BJ (cell line): ENCODE measurements at regions of chr22 and their contacts with region 1.

Region 1: DNA sequence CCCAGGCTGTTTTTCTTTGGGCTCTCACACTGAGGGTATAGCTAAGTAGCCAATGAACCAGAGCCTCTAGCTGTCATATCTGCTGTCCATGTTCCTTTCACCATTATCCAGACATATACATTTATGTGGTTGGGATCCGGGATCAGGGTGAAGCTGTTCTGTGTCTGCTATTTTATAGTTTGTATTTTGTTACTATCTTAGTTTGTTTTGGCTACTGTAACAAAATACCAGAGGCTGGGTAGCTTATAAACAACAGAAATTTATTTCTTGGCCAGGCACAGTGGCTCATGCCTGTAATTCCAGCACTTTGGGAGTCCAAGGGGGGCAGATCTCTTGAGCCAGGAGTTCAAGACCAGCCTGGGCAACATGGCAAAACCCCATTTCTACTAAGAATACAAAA is 40.5 kb upstream of the CABP7 start:
- DNase-seq: no peak
- H3K4me3 ChIP-seq: no peak overlapping the region
- H3K27me3 ChIP-seq: no peaks in the 10 kb centered on the region
- CTCF ChIP-seq: no peak

Region 2: GRCh38 chr22:29663180-29663821 is 16.0 kb before region 1 on chr22:
- CTCF ChIA-PET with region 1: interaction called, 11 read pairs
- POLR2A ChIA-PET with region 1: no interaction called
- DNase-seq: no peak
- H3K4me3 ChIP-seq: no peak overlapping the region
- H3K27me3 ChIP-seq: no peaks in the 10 kb centered on the region
- CTCF ChIP-seq: no peak

Region 3: GRCh38 chr22:29701155-29701999 is 22.1 kb after region 1 on chr22:
- CTCF ChIA-PET with region 1: no interaction called
- POLR2A ChIA-PET with region 1: no interaction called
- DNase-seq: no peak
- H3K4me3 ChIP-seq: no peak overlapping the region
- H3K27me3 ChIP-seq: no peaks in the 10 kb centered on the region
- CTCF ChIP-seq: peak; percentile 25; the same call in 1 of the 2 replicates

Region 4: GRCh38 chr22:29727131-29727523 is 47.8 kb after region 1 on chr22:
- CTCF ChIA-PET with region 1: no interaction called
- POLR2A ChIA-PET with region 1: no interaction called
- DNase-seq: no peak
- H3K4me3 ChIP-seq: no peak overlapping the region
- H3K27me3 ChIP-seq: peaks cover 11% of the 10 kb centered on the region
- CTCF ChIP-seq: peak; percentile 55